IMR-90 (cell line): ENCODE measurements at regions of chr9 and their contacts with region 1.

Region 1: DNA sequence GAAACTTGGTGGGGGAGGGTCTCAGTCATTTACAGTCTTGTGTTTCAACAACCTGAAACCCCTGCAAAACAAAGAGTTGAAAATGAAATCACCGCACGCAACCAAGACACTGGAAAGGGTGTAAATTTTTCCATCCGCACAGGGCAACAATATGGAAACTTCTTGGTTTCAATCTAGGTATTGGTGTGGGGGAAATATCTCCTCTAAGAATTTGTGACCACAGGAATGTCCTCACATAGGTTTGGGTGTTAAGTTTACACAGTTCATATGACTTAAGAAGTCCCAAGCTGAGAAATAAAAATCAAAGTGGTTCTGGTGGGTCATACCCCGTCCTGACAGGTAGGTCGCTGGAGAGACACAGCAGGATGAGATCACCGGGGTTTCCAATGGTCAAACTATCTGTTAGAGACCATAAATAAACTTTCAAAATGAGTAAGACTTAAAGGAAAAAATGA is 51.9 kb upstream of the PIP5K1B start:
- DNase-seq: no peak
- ATAC-seq: no peak
- H3K4me3 ChIP-seq: no peak overlapping the region
- H3K27ac ChIP-seq: no peak overlapping the region
- H3K4me1 ChIP-seq: no peaks in the 10 kb centered on the region
- H3K27me3 ChIP-seq: no peaks in the 10 kb centered on the region
- CTCF ChIP-seq: no peak
- POLR2A ChIP-seq: no peak
- RAD21 ChIP-seq: no peak

Region 2: DNA sequence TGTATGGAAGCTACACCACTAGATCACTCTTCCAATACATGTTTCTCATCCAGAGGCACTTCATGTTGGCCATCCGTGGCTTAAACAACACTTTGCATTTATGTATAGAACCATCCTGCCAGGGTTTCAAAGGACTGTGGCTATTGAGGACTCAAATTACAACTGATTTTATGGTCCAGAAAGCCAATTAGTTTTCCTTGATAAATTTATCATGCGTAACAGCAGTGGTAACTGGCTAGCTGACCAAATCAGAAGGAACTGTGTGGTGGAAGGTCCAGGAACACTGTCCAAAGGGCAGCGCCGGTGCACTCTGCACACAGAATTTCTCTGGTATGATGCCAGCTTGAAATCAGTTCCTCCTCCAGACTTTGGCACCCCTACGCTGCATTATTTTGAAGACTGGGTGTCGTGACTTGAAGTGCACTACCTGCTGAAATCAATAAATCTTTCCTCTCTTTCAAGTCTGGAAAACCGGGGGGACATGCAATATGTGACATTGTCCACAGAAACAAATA is 43.2 kb before region 1 on chr9:
- CTCF ChIA-PET with region 1: no interaction called
- POLR2A ChIA-PET with region 1: no interaction called
- dilution Hi-C with region 1: no loop called
- in situ Hi-C with region 1: no loop called
- intact Hi-C with region 1: loop called (anchors 2 kb)
- DNase-seq: no peak
- ATAC-seq: no peak
- H3K4me3 ChIP-seq: no peak overlapping the region
- H3K27ac ChIP-seq: no peak overlapping the region
- H3K4me1 ChIP-seq: no peaks in the 10 kb centered on the region
- H3K27me3 ChIP-seq: no peaks in the 10 kb centered on the region
- CTCF ChIP-seq: no peak
- POLR2A ChIP-seq: no peak
- RAD21 ChIP-seq: no peak